ENCODE measurements at regions of chr1 and their contacts with region 1.

Region 1: GRCh38 chr1:24635195-24635843 is 7.8 kb upstream of the SRRM1 start:
- DNase-seq: peak in 3 of 14 experiments; percentile 69 to 75 (median 74)
- ATAC-seq: peak; percentile 89
- H3K4me3 ChIP-seq: no peak overlapping the region
- H3K4me3 Mint-ChIP-seq: no peak overlapping the region
- H3K27ac ChIP-seq: no peak overlapping the region
- H3K27ac Mint-ChIP-seq: no peak overlapping the region
- H3K4me1 ChIP-seq: no peaks in the 10 kb centered on the region
- H3K4me1 Mint-ChIP-seq: peaks cover 9% of the 10 kb centered on the region
- H3K27me3 ChIP-seq: peaks cover 0 to under 1% of the 10 kb centered on the region in 2 experiments
- H3K27me3 Mint-ChIP-seq: peaks cover 11% of the 10 kb centered on the region
- CTCF ChIP-seq: peak; percentile 76

Region 2: GRCh38 chr1:24150234-24151174 is 484.8 kb before region 1 on chr1:
- CTCF ChIA-PET with region 1: interaction called, 3 read pairs
- POLR2A ChIA-PET with region 1: no interaction called
- intact Hi-C with region 1: loop called in 1 of 2 experiments (anchors 2 kb)
- DNase-seq: peak; percentile 76 to 91 (median 87)
- ATAC-seq: peak; percentile 98
- H3K4me3 ChIP-seq: peak overlapping the region; percentile 31
- H3K4me3 Mint-ChIP-seq: peak overlapping the region; percentile 44
- H3K27ac ChIP-seq: no peak overlapping the region
- H3K27ac Mint-ChIP-seq: no peak overlapping the region
- H3K4me1 ChIP-seq: peaks cover 12% of the 10 kb centered on the region
- H3K4me1 Mint-ChIP-seq: peaks cover 11% of the 10 kb centered on the region
- H3K27me3 ChIP-seq: peaks cover 11 to 23% of the 10 kb centered on the region in 2 experiments
- H3K27me3 Mint-ChIP-seq: peaks cover 46% of the 10 kb centered on the region
- CTCF ChIP-seq: peak; percentile 87

Region 3: DNA sequence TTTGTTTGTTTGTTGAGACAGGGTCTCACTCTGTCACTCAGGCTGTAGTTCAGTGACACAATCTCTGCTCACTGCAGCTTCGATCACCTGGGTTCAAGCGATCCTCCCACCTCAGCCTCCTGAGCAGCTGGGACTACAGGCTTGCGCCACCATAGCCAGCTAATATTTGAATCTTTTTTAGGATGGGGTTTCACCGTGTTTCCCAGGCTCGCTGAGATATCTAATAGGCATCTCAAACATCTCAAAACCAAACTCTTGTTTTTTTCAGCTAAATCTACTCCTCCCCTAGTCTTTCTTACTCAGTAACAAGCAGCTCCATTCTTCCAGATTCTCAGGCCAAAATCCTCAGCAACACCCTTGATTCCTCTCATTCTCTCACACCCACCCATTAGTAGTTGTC is 14.2 kb before region 1 on chr1:
- CTCF ChIA-PET with region 1: no interaction called
- POLR2A ChIA-PET with region 1: no interaction called
- intact Hi-C with region 1: no loop called
- DNase-seq: no peak
- ATAC-seq: no peak
- H3K4me3 ChIP-seq: no peak overlapping the region
- H3K4me3 Mint-ChIP-seq: no peak overlapping the region
- H3K27ac ChIP-seq: no peak overlapping the region
- H3K27ac Mint-ChIP-seq: no peak overlapping the region
- H3K4me1 ChIP-seq: no peaks in the 10 kb centered on the region
- H3K4me1 Mint-ChIP-seq: no peaks in the 10 kb centered on the region
- H3K27me3 ChIP-seq: no peaks in the 10 kb centered on the region
- H3K27me3 Mint-ChIP-seq: peaks cover 28% of the 10 kb centered on the region
- CTCF ChIP-seq: no peak

Region 4: DNA sequence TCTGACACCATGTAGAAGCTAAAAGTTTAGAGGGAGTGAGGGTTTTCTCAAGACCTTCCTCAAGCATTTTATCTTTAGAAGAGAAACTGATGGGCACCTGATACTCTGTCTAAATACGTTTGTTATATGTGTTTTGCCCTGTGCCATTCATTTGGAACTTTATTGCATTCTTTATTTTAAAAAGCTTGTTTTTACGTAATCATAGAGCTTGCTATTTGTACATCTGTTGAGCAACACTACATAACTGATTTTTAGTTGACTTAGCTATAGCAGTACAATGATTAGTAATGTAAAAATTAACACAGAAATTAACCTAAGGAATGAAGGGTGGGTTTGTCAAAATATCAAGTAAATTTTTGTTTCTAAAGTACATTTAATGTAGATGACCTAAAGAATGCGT is 206.3 kb after region 1 on chr1:
- CTCF ChIA-PET with region 1: no interaction called
- POLR2A ChIA-PET with region 1: no interaction called
- intact Hi-C with region 1: no loop called
- DNase-seq: no peak
- ATAC-seq: no peak
- H3K4me3 ChIP-seq: no peak overlapping the region
- H3K4me3 Mint-ChIP-seq: no peak overlapping the region
- H3K27ac ChIP-seq: no peak overlapping the region
- H3K27ac Mint-ChIP-seq: no peak overlapping the region
- H3K4me1 ChIP-seq: no peaks in the 10 kb centered on the region
- H3K4me1 Mint-ChIP-seq: no peaks in the 10 kb centered on the region
- H3K27me3 ChIP-seq: no peaks in the 10 kb centered on the region
- H3K27me3 Mint-ChIP-seq: peaks cover 7% of the 10 kb centered on the region
- CTCF ChIP-seq: no peak

Measured in CD4-positive, alpha-beta T cell (primary cell).